ENCODE measurements at regions of chr1 and their contacts with region 1.

Region 1: GRCh38 chr1:225977937-225978748 is 21.0 kb downstream of the SDE2 start:
- DNase-seq: no peak
- H3K4me3 ChIP-seq: no peak overlapping the region
- H3K27ac ChIP-seq: no peak overlapping the region
- H3K4me1 ChIP-seq: no peaks in the 10 kb centered on the region
- H3K27me3 ChIP-seq: no peaks in the 10 kb centered on the region
- CTCF ChIP-seq: no peak

Region 2: DNA sequence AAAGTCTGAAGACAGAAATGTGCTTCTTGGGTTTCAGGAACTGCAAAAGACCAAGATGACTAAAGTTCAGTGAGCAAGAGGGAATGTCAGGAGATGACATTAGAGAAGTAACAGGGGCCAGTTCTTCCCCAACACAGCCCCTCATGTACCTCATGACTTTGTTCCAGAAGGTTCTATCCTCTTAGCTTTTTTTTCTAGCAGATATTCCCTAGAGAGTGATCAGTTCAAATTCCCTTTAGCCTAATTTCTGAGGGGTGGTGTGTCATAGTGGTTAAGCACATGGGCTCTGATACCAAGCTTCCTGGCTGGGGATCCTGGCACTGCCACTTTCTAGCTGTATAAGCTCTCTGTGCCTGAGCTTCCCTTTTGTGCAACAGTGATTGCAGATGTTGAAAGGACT is 658.3 kb before region 1 on chr1:
- intact Hi-C with region 1: loop called (anchors 10 kb)
- DNase-seq: no peak
- H3K4me3 ChIP-seq: no peak overlapping the region
- H3K27ac ChIP-seq: no peak overlapping the region
- H3K4me1 ChIP-seq: no peaks in the 10 kb centered on the region
- H3K27me3 ChIP-seq: no peaks in the 10 kb centered on the region
- CTCF ChIP-seq: no peak

Region 3: GRCh38 chr1:225911191-225912130 is 66.7 kb before region 1 on chr1:
- intact Hi-C with region 1: loop called (anchors 5 kb)
- DNase-seq: peak in 1 of 2 donors; percentile 79
- H3K4me3 ChIP-seq: no peak overlapping the region
- H3K27ac ChIP-seq: no peak overlapping the region
- H3K4me1 ChIP-seq: peaks cover 0 to 4% of the 10 kb centered on the region in 2 donors
- H3K27me3 ChIP-seq: no peaks in the 10 kb centered on the region
- CTCF ChIP-seq: peak; percentile 92 to 97 (median 96)

Measured in ascending aorta (tissue), 2 donors.